ENCODE measurements at regions of chr17 and their contacts with region 1.

Region 1: GRCh38 chr17:41417576-41418015 is 6.8 kb downstream of the KRT37 start:
- DNase-seq: peak; percentile 72
- H3K4me3 Mint-ChIP-seq: peak overlapping the region; percentile 29
- H3K27ac Mint-ChIP-seq: peak overlapping the region; percentile 84
- H3K4me1 Mint-ChIP-seq: peaks cover 72% of the 10 kb centered on the region
- H3K27me3 Mint-ChIP-seq: no peaks in the 10 kb centered on the region
- CTCF ChIP-seq: peak; percentile 91

Region 2: DNA sequence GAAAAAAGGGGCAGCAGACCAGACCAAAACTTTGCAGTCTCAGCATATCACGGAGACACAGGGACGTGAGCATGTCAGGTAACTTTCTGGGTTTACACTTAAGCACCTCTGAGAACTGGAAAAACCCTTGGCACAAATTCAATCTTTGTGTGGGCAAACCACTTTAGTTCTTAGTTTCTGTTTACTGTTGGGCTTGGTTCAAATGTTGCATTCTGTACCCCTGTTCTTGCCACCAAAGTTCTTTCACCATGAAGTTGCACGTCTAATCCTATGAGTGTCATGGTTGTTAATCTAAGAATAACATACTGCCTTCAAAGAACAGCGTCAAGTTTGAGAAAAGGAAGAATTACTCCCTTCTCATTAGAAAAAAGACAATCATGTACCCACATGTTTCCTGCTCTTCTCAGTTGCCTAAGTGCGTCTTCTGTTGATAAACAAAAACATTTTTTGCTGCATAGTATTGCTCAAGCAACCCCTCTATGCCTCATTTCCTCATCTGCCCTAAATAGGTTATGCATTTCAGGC is 78.6 kb before region 1 on chr17:
- CTCF ChIA-PET with region 1: no interaction called
- intact Hi-C with region 1: loop called (anchors 5 kb)
- DNase-seq: no peak
- H3K4me3 Mint-ChIP-seq: no peak overlapping the region
- H3K27ac Mint-ChIP-seq: peak overlapping the region; percentile 25
- H3K4me1 Mint-ChIP-seq: peaks cover 32% of the 10 kb centered on the region
- H3K27me3 Mint-ChIP-seq: no peaks in the 10 kb centered on the region
- CTCF ChIP-seq: no peak

Region 3: DNA sequence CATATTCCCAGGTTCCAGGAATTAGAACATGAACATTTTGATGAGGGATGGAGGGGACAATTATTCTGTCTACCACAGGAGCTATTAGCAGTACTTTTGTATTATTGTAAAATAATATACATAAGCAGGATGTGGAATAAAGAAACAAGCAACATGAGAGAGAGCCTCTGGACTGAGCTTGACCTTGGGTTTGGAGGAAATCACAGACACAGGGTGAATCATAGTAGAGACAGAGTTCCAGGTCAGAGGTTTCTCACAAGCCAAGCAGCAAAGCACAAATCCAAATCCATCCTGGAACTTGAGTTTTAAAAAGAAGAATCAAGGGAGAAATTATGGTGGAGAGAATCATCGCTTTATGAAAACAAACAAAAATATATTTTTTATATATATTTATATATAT is 25.3 kb before region 1 on chr17:
- CTCF ChIA-PET with region 1: no interaction called
- intact Hi-C with region 1: no loop called
- DNase-seq: no peak
- H3K4me3 Mint-ChIP-seq: no peak overlapping the region
- H3K27ac Mint-ChIP-seq: no peak overlapping the region
- H3K4me1 Mint-ChIP-seq: peaks cover 26% of the 10 kb centered on the region
- H3K27me3 Mint-ChIP-seq: no peaks in the 10 kb centered on the region
- CTCF ChIP-seq: no peak

Region 4: DNA sequence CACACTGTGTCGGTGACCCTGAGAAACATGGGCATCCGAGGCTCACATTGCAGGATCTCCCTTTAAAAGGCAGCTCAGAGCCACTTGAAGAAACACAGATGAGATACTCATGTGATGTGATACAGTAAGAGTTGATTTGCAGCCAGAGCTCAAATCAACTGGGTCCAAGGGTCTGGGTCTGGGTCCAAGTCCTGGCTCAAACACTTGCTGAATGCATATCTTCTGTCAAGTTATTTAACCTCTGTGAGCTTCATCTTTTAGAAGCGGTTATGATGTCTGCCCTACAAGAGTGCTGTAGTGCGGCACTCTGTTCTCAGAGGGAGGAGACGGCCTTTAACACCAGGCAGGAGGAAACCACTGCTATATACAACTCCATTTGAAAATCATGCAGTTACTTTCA is 16.8 kb after region 1 on chr17:
- CTCF ChIA-PET with region 1: interaction called, 11 read pairs
- intact Hi-C with region 1: no loop called
- DNase-seq: no peak
- H3K4me3 Mint-ChIP-seq: no peak overlapping the region
- H3K27ac Mint-ChIP-seq: no peak overlapping the region
- H3K4me1 Mint-ChIP-seq: peaks cover 5% of the 10 kb centered on the region
- H3K27me3 Mint-ChIP-seq: no peaks in the 10 kb centered on the region
- CTCF ChIP-seq: no peak

Measured in Calu3 (cell line).